Activated CD4-positive, alpha-beta T cell treated with anti-CD3 and anti-CD28 coated beads for 36 hours (primary cell): ENCODE measurements at regions of chr5 and their contacts with region 1.

Region 1: DNA sequence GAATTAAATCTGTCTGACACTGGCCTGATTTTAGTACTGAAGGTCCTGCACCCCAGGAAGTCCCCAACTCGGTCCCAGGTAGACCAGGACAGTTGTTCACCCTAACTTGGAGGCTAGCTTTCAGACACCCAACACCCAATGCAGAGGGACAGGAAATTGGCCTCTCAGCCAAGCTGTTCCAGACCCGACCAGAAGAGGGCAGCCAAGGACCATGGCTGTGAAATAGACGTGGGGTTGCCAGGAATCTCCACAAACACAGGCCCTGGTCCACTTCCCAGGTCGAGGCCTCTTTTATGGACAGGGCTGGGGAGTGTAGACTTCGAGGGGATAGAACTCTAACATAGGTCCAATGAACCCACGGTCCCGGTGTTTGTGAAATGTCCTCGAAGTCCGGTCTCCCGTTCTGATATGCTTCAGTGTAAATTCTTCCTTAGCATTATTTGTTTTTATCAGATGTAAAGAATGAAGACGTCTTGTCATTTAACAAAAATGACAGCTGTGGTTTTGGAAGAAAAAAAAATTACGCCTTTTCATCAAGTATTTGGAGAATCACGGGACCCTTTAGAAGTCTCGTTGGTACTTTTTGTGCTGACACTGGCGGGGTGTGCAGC is 260.3 kb upstream of the ADAMTS16 start:
- DNase-seq: peak; percentile 78
- ATAC-seq: peak; percentile 53
- H3K4me3 Mint-ChIP-seq: no peak overlapping the region
- H3K27ac Mint-ChIP-seq: no peak overlapping the region
- H3K4me1 Mint-ChIP-seq: no peaks in the 10 kb centered on the region
- H3K27me3 Mint-ChIP-seq: no peaks in the 10 kb centered on the region

Region 2: DNA sequence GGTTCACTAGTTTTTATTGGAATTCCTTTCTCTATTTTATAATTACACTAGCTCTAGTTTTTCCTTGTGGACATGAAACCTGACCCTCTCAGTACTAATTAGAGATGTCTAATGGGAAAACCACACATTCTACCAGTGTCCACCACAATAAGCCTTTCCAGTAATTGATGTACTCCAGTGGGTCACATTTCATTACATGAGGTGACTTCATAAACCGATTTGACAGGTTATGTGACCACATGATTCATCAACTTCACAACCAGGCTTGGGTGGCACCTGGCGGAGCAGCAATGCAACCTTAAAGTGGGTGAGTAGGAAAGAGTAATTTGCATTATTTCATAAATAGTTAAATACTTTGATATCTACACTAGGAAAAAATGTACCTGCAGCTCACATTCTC is 23.9 kb before region 1 on chr5:
- CTCF ChIA-PET with region 1: no interaction called
- POLR2A ChIA-PET with region 1: no interaction called
- intact Hi-C with region 1: no loop called
- DNase-seq: no peak
- ATAC-seq: no peak
- H3K4me3 Mint-ChIP-seq: no peak overlapping the region
- H3K27ac Mint-ChIP-seq: no peak overlapping the region
- H3K4me1 Mint-ChIP-seq: no peaks in the 10 kb centered on the region
- H3K27me3 Mint-ChIP-seq: no peaks in the 10 kb centered on the region

Region 3: GRCh38 chr5:4941957-4942830 is 62.4 kb after region 1 on chr5:
- CTCF ChIA-PET with region 1: interaction called, 3 read pairs
- POLR2A ChIA-PET with region 1: no interaction called
- intact Hi-C with region 1: loop called in 1 of 2 experiments (anchors 2 kb)
- DNase-seq: peak; percentile 35
- ATAC-seq: no peak
- H3K4me3 Mint-ChIP-seq: no peak overlapping the region
- H3K27ac Mint-ChIP-seq: no peak overlapping the region
- H3K4me1 Mint-ChIP-seq: no peaks in the 10 kb centered on the region
- H3K27me3 Mint-ChIP-seq: no peaks in the 10 kb centered on the region

Region 4: DNA sequence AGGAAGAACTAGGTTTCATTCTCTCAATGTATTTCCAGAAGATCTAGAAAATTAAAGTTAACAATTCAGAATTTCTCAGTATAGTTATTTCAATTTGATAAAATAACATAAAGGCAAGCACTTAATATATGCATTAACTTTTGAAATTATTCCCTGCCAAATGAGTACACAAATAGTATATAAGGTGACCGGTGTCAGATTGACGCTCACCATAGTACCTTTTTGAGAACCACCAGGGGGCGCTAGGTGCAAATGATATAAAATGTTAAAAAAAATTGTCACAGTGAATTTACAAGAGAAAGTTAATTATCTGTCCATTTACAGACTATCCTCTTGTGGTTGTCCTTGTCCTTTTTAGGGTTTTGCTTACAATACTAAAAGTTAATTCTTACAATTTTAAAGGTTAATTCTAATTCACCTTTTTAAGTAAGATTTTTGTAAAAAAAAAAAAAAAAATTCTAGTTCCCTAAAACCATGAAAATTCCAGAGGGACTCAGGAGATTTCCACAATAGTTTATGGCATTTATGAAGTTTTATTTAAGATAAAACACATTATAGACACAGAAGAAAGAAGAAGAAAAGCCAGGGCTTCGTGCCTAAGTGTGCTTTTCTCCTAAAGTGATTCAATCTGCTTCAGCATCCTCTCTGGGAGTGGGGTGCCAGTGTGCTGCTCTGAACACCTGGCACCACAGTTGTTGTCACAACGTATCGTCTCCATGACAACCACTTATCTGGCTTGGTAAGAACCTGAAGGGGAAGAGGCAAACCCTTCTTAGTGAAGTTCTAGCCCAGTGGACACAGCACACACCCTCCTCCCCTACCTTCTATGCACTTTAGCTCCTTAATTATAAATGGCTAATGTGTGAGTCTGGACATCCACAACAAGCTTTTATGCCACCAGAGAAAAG is 262.1 kb after region 1 on chr5:
- CTCF ChIA-PET with region 1: no interaction called
- POLR2A ChIA-PET with region 1: no interaction called
- intact Hi-C with region 1: loop called in 1 of 2 experiments (anchors 10 kb)
- DNase-seq: peak; percentile 69
- ATAC-seq: no peak
- H3K4me3 Mint-ChIP-seq: no peak overlapping the region
- H3K27ac Mint-ChIP-seq: no peak overlapping the region
- H3K4me1 Mint-ChIP-seq: peaks cover 6% of the 10 kb centered on the region
- H3K27me3 Mint-ChIP-seq: peaks cover 22% of the 10 kb centered on the region

Region 5: DNA sequence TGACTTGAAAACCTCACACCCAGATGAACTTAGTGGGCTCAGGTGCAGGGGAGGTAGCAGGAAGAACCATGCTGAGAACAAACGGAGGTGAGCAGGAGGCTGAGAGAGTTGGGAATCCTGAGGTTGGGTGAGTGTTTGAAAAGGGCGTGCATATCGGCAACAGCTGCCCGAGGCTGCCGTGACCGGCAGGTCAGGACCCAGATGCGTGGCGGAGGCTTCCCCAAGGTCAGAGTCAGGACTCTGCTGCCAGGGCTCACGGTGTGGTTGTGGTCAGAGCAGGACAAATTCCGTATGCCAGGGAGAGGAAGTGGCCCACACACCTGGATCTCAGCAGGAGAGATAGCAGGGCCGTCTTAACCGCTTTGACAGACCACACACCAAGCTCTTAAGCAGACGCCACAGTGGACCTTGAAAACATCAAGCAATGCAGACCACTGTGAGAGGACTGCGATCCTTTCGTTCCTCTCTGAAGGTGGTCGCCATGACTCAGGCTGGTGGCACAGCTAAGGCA is 303.4 kb after region 1 on chr5:
- CTCF ChIA-PET with region 1: no interaction called
- POLR2A ChIA-PET with region 1: no interaction called
- intact Hi-C with region 1: no loop called
- DNase-seq: no peak
- ATAC-seq: no peak
- H3K4me3 Mint-ChIP-seq: no peak overlapping the region
- H3K27ac Mint-ChIP-seq: no peak overlapping the region
- H3K4me1 Mint-ChIP-seq: peaks cover 9% of the 10 kb centered on the region
- H3K27me3 Mint-ChIP-seq: peaks cover 22% of the 10 kb centered on the region